Posterior cingulate gyrus (tissue), 11 donors: ENCODE measurements at regions of chr3 and their contacts with region 1.

Region 1: GRCh38 chr3:10224784-10225665 is 23.2 kb upstream of the TATDN2 start:
- DNase-seq: peak in 9 of 10 donors; percentile 52 to 95 (median 77)

Region 2: GRCh38 chr3:10164546-10165393 is 60.3 kb before region 1 on chr3 and contains the start of gene IRAK2:
- intact Hi-C with region 1: loop called (anchors 2 kb)
- DNase-seq: peak; percentile 51 to 96 (median 70)